HEK293 (cell line): ENCODE measurements at regions of chr11 and their contacts with region 1.

Region 1: DNA sequence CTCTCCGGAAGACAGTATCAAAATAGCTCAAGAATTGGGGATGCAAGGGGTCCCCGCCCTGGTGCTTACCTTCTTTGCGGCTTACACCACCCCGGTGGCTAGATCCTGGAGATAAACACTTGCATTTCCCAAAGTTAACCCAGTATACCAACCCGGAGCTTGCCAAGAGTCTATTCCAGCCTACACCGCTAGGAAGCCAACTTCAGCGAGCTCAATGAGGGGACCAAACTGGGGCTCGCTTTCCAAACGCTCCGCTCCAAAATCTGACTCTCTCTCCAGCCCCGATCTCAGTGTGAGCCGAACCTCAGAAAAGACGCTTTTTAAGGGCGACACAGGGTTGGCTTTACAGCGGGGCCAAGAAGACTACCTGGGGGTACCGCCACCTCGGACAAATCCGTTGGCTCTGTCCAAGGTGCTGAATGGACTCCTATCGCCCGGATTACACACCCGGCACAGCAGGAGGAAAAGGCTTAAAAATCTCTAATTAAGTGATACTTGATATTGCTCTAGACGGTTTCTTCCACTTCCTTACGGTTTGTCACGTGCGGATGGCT is 20.1 kb upstream of the BDNF start:
- H3K4me3 ChIP-seq: no peak overlapping the region
- H3K27ac ChIP-seq: no peak overlapping the region
- H3K4me1 ChIP-seq: peaks cover 5% of the 10 kb centered on the region; the same call in 1 of the 2 replicates
- CTCF ChIP-seq: no peak

Region 2: DNA sequence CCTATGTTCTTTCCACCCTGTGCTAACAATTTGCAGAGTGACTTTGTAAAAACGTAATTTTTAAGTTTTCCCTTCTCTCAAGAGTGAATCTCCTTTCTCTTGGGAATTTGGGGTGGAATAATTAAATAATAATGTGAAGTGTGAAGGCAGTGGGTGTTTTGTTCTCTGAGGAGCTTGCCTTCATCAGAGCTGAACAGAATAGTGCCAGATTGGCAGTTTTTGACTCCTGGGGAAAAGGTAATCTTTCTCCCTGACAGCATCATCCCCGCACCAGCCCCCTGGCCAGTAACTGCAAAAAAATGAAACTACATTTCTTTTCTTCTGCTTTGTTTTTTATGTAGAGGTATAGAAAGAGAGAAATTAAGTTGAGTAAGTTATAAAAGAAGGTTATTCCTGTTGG is 1208.2 kb before region 1 on chr11:
- CTCF ChIA-PET with region 1: no interaction called
- POLR2A ChIA-PET with region 1: interaction called, 10 read pairs
- H3K4me3 ChIP-seq: no peak overlapping the region
- H3K27ac ChIP-seq: no peak overlapping the region
- H3K4me1 ChIP-seq: no peaks in the 10 kb centered on the region
- CTCF ChIP-seq: no peak

Region 3: DNA sequence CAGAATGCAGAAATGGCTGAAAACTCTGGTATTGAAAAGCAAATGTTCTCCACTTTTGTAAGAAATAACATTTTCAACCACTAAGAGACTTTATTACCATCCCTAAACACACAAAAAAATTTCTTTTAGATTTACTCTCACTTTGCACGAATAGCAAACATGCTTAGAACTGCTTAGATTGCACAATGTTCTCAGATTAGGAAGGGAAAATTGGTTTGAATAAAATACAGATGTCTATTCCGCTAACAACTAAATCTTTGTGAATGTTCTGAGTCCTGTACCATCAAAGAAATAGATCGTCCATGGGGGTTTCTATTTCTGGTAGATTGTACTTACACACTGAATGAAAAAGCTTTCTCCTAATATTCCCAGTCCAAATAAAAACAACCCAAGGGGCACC is 60.2 kb before region 1 on chr11:
- CTCF ChIA-PET with region 1: no interaction called
- POLR2A ChIA-PET with region 1: no interaction called
- H3K4me3 ChIP-seq: no peak overlapping the region
- H3K27ac ChIP-seq: no peak overlapping the region
- H3K4me1 ChIP-seq: no peaks in the 10 kb centered on the region
- CTCF ChIP-seq: no peak

Region 4: DNA sequence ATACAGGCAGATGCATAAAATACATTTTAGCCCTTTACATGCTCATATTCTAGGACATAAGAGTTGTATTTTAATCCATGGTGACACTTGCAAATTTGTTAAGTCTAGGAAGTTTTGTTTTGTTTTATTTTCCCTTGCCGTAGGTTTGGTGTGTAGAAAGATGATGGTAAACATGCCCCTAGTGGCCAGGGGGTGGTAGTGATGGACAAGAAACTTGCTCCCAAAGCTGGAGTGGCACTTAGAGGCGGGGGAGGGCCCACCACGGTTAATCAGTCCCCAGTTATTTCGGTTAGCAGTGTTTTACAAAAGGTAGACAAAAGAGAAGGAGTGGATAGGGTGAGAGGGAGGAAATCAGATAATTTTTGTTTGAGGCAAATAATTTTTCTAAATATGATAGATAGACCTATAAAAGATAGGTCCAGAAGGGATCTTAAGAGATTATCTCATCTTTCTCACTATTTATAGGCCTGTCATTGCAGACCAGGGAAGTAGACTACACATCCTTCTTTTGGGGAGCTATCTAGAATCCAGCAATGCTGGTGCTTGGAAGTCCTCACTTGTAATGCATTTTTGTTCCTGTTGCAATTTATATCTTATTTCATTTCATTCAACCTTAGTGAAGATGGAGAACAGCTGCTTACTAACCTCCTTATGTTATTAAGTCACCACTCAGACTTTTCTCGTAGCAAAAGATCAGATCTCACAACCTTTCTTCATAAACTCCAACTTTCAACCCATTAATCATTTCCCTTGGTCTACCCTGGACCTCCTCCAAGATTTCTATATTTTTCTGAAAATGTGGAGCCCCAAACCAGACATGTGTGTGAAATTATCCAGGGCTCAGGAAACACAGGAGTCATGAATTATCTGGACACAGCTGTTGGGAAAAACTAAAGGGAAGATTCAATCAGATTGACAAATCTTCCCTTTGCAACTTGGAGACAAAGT is 14.2 kb before region 1 on chr11:
- CTCF ChIA-PET with region 1: interaction called, 23 read pairs
- POLR2A ChIA-PET with region 1: interaction called, 3 read pairs
- H3K4me3 ChIP-seq: no peak overlapping the region
- H3K27ac ChIP-seq: no peak overlapping the region
- H3K4me1 ChIP-seq: no peaks in the 10 kb centered on the region
- CTCF ChIP-seq: no peak

Region 5: GRCh38 chr11:28442113-28442512 is 721.8 kb after region 1 on chr11:
- CTCF ChIA-PET with region 1: no interaction called
- POLR2A ChIA-PET with region 1: no interaction called
- H3K4me3 ChIP-seq: no peak overlapping the region
- H3K27ac ChIP-seq: no peak overlapping the region
- H3K4me1 ChIP-seq: no peaks in the 10 kb centered on the region
- CTCF ChIP-seq: no peak